Sigmoid colon (tissue), 7 donors: ENCODE measurements at regions of chrX and their contacts with region 1.

Region 1: GRCh38 chrX:118847676-118848075 is 24.1 kb downstream of the ZCCHC12 start:
- DNase-seq: no peak
- H3K4me3 ChIP-seq: no peak overlapping the region
- H3K27ac ChIP-seq: no peak overlapping the region
- H3K4me1 ChIP-seq: no peaks in the 10 kb centered on the region
- H3K27me3 ChIP-seq: no peaks in the 10 kb centered on the region
- CTCF ChIP-seq: peak; percentile 24 to 49 (median 36)
- EP300 ChIP-seq: no peak
- POLR2A ChIP-seq: no peak

Region 2: DNA sequence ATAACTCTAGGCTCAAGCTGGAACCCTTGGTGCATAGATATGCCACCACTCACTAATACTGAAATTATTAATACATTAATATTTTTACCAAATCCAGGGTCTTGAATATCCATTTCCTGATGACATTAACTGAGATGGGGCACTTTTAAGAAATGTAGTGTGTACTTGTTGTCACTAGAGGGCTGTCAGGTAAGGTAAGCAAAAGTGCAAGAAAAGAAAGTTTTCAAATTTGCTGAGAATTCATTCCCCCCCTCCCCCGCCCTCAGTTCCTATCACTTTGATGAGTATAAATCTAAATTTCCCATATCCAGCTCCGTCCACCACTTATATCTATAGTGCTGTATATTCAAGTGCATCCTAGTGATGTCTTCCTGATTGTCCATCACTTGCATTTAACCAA is 522.2 kb before region 1 on chrX:
- intact Hi-C with region 1: no loop called
- DNase-seq: no peak
- H3K4me3 ChIP-seq: no peak overlapping the region
- H3K27ac ChIP-seq: no peak overlapping the region
- H3K4me1 ChIP-seq: no peaks in the 10 kb centered on the region
- H3K27me3 ChIP-seq: no peaks in the 10 kb centered on the region
- CTCF ChIP-seq: no peak
- EP300 ChIP-seq: no peak
- POLR2A ChIP-seq: no peak

Region 3: GRCh38 chrX:118974088-118974907 is 126.6 kb after region 1 on chrX and contains the start of gene LONRF3:
- intact Hi-C with region 1: loop called (anchors 2 kb)
- DNase-seq: peak; percentile 94
- H3K4me3 ChIP-seq: peak within 1 kb of the TSS; percentile 58 to 68 (median 63)
- H3K27ac ChIP-seq: peak within 1 kb of the TSS; percentile 74 to 89 (median 83)
- H3K4me1 ChIP-seq: peaks cover 0 to 15% (median 10%) of the 10 kb centered on the region in 4 donors
- H3K27me3 ChIP-seq: no peaks in the 10 kb centered on the region
- CTCF ChIP-seq: no peak
- EP300 ChIP-seq: no peak
- POLR2A ChIP-seq: peak; percentile 92 to 94
- total RNA-seq, gene LONRF3: 14.4 to 26.8 (median 16.4) TPM

Region 4: GRCh38 chrX:119004920-119005524 is 157.3 kb after region 1 on chrX:
- intact Hi-C with region 1: loop called (anchors 2 kb)
- DNase-seq: peak; percentile 75
- H3K4me3 ChIP-seq: no peak overlapping the region
- H3K27ac ChIP-seq: no peak overlapping the region
- H3K4me1 ChIP-seq: peaks cover 0 to 6% (median 0%) of the 10 kb centered on the region in 4 donors
- H3K27me3 ChIP-seq: no peaks in the 10 kb centered on the region
- CTCF ChIP-seq: peak; percentile 25 to 68 (median 56)
- EP300 ChIP-seq: no peak
- POLR2A ChIP-seq: no peak

Region 5: GRCh38 chrX:119067023-119067739 is 219.5 kb after region 1 on chrX:
- intact Hi-C with region 1: loop called (anchors 5 kb)
- DNase-seq: peak; percentile 77
- H3K4me3 ChIP-seq: no peak overlapping the region
- H3K27ac ChIP-seq: no peak overlapping the region
- H3K4me1 ChIP-seq: no peaks in the 10 kb centered on the region
- H3K27me3 ChIP-seq: no peaks in the 10 kb centered on the region
- CTCF ChIP-seq: peak; percentile 25 to 52 (median 42)
- EP300 ChIP-seq: no peak
- POLR2A ChIP-seq: no peak